OCI-LY7 (cell line): ENCODE measurements at regions of chr7 and their contacts with region 1.

Region 1: DNA sequence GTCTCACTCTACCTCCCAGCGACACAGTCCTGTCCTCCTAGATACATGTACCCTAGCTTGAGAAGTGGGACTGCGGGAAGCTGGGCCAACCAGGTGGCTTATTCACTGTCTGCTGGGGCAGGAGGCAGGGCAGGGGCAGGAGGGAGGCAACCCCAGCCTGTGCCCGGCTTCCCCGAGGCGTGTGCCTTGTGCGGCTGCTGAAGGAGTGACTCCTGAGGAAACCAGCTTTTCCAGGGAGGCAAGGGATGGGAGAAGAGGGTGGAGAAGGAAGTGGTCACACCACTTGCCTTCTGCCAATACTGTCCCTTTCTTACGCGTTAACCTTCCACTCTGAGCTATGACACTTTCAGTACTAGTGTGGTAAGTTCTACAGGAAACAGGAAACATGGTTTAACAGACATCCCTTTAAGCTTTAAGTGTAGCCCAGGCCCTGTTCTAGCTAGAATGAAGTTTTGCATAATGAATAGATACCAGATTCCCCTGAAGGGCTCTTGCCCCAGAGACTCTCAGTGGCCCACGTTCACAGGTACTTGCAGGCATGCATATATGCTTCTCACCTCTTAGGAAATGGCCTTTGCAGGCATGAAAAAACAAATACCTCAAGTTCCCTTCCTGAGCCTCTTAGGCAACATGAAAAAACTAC is 40.6 kb downstream of the SYPL1 start:
- DNase-seq: peak; percentile 96
- H3K4me3 ChIP-seq: peak overlapping the region; percentile 70
- H3K27ac ChIP-seq: peak overlapping the region; percentile 96
- H3K4me1 ChIP-seq: peaks cover 98% of the 10 kb centered on the region
- CTCF ChIP-seq: no peak

Region 2: GRCh38 chr7:105565190-105565589 is 506.3 kb before region 1 on chr7:
- CTCF ChIA-PET with region 1: no interaction called
- POLR2A ChIA-PET with region 1: no interaction called
- intact Hi-C with region 1: no loop called
- DNase-seq: no peak
- H3K4me3 ChIP-seq: no peak overlapping the region
- H3K27ac ChIP-seq: no peak overlapping the region
- H3K4me1 ChIP-seq: no peaks in the 10 kb centered on the region
- CTCF ChIP-seq: no peak

Region 3: DNA sequence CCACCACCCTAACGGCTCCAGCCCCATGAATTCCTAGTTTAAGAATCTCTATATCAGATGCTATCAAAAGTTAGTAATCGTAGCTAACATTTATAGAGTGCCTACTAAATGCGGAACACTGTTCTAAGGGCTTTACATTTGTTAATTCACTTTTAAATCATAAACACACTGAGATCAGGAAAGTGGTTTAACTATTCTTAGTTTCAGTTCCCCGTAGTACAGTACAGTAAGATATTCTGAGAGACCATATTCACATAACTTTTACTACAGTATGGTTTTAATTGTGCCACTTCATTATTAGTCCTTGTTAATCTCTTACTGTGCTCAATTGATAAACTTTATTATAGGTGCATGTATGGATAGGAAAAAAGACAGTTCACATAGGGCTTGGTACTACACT is 18.2 kb after region 1 on chr7:
- CTCF ChIA-PET with region 1: interaction called, 4 read pairs
- POLR2A ChIA-PET with region 1: interaction called, 135 read pairs
- intact Hi-C with region 1: loop called (anchors 2 kb)
- DNase-seq: peak; percentile 66
- H3K4me3 ChIP-seq: peak overlapping the region; percentile 38
- H3K27ac ChIP-seq: peak overlapping the region; percentile 87
- H3K4me1 ChIP-seq: peaks cover 76% of the 10 kb centered on the region
- CTCF ChIP-seq: no peak